B cell (primary cell): ENCODE measurements at regions of chr11 and their contacts with region 1.

Region 1: GRCh38 chr11:27296497-27296896 is 66.5 kb downstream of the CCDC34 start:
- DNase-seq: no peak
- ATAC-seq: no peak
- H3K4me3 ChIP-seq: no peak overlapping the region
- H3K4me3 Mint-ChIP-seq: no peak overlapping the region
- H3K27ac ChIP-seq: no peak overlapping the region
- H3K27ac Mint-ChIP-seq: no peak overlapping the region
- H3K4me1 ChIP-seq: no peaks in the 10 kb centered on the region
- H3K4me1 Mint-ChIP-seq: no peaks in the 10 kb centered on the region
- H3K27me3 ChIP-seq: no peaks in the 10 kb centered on the region
- H3K27me3 Mint-ChIP-seq: peaks cover 6% of the 10 kb centered on the region
- CTCF ChIP-seq: peak; percentile 26

Region 2: DNA sequence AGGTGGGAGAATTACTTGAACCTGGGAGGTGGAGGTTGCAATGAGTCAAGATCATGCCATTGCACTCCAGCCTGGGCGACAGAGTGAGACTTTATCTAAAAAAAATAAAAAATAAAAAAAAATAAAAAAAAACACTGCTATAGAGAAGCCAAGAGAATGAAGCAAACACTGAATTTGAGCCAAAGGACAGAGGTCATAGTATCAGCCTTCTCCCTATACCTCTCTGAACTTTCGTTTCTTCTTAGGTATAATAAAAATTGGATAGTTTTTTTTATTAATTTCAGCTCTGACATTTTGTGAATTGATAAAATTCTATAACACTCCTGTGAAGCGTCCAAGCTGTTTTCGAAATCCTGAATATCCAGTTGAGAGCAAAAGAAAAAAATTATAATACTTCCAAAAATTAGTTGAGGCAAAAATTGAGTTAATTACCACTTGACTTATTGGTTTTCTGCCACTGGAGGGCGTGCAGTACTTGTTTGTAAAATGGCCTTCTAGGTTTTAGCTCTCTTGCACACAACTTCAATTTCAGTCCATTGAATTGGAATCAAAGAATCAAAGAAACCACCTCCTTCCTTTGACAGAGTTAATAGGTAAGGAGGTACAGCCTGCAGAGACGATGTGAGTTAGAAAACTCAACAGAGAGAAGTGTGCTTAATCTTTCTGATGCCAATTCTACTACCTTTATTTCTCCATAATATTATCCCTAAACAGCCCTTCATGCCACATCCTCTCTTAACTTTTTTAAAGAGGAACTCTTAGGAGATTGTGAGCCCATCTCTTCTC is 112.6 kb before region 1 on chr11:
- CTCF ChIA-PET with region 1: interaction called, 31 read pairs
- POLR2A ChIA-PET with region 1: no interaction called
- intact Hi-C with region 1: no loop called
- DNase-seq: peak; percentile 46
- ATAC-seq: no peak
- H3K4me3 ChIP-seq: no peak overlapping the region
- H3K4me3 Mint-ChIP-seq: no peak overlapping the region
- H3K27ac ChIP-seq: no peak overlapping the region
- H3K27ac Mint-ChIP-seq: no peak overlapping the region
- H3K4me1 ChIP-seq: no peaks in the 10 kb centered on the region
- H3K4me1 Mint-ChIP-seq: no peaks in the 10 kb centered on the region
- H3K27me3 ChIP-seq: peaks cover 0 to 2% (median 0%) of the 10 kb centered on the region in 4 experiments
- H3K27me3 Mint-ChIP-seq: peaks cover 10% of the 10 kb centered on the region
- CTCF ChIP-seq: peak; percentile 64